ENCODE measurements at regions of chr17 and their contacts with region 1.

Region 1: DNA sequence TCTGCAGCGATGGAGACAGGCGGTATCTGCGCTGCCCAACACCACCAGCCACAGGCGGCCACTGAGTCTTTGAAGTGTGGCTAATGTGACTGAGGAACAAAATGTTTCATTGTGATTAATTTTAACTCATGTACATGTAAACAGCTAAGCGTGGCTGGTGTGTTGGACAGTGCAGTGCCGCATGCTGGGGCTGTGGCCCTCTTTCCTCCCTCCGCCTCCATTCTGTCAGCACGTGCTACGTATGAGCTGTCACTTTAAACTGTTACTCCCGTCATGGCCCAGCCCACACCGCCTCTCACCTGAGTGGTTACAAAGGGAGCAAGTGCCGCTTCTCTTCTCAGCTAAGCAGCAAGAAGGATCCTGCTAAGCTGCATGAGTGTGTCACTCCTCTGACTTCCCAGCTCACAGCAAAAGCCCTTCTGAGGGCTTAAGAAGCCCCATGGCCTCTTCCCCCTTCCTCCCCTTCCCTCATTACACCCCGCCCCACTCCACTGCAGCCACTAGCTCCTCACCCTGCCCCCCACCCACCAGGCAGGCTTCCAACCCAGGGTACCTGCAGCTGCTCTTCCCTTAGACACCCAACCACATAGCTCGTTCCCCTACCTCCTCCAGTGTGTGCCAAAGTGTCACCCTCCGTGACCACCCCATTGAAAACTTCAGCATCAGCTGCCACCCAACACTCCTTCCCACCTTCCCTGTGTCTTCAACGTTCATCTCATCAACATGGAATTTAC is 15.0 kb downstream of the HASPIN start:
- DNase-seq: no peak
- H3K4me3 ChIP-seq: no peak overlapping the region
- CTCF ChIP-seq: no peak

Region 2: GRCh38 chr17:3754458-3755334 is 16.0 kb after region 1 on chr17:
- CTCF ChIA-PET with region 1: interaction called, 122 read pairs
- POLR2A ChIA-PET with region 1: no interaction called
- DNase-seq: no peak
- H3K4me3 ChIP-seq: no peak overlapping the region
- CTCF ChIP-seq: no peak

Region 3: DNA sequence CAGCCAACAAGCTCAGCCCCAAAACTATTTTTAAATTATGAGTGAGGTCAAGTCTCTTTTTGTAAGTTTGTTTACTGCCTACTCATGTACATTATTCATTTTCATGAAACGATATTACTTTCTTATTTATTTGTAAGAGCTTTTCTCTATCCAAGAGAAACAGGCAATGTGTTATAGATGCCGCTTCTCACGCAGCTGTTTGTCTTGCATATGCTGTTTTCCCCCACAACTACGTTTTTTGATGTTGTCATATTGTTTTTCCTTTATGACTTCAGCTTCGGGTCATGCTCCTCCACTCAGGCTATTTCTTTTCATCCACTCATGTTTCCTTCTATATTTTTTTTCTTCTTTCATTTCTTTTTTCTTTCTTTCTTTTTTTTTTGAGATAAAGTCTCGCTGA is 42.3 kb after region 1 on chr17:
- CTCF ChIA-PET with region 1: interaction called, 11 read pairs
- POLR2A ChIA-PET with region 1: no interaction called
- DNase-seq: no peak
- H3K4me3 ChIP-seq: no peak overlapping the region
- CTCF ChIP-seq: no peak

Region 4: DNA sequence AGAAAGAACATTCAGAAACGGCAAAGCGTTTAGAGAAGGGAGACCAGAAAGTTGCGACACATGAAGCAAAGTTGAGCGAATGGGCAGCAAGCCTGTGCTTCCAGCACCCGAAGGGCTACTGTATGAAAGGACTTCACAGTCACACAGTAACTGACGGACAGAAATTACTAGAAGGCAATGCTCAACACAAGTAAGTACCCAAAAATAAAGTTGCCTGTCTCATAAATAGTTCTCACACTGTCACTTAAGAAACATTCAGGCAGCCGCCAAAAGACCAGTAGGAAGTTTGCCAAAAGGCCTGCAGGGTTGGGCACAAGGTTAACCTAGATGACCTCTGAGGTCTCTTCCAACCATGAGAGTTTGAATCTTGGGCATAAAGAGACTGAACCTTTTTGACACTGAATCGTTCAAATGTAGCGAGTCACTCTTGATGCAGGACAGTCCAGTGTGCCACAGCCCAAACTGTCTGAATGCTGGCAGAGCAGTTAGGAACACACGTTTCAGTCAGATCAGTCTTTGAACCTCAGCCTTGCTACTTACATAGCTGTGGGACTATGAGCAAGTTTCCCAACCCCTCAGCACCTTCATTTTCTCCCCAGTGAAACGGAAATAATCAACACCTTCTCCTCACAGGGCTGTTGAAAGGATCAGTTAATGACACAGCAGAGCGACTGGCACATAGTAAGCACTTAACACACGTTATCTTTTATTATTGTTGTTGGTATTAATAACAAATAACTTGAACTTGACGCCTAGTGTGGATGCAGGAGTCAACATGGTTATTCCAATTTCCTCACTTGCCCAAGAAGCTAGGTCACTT is 96.9 kb after region 1 on chr17:
- CTCF ChIA-PET with region 1: interaction called, 15 read pairs
- POLR2A ChIA-PET with region 1: no interaction called
- DNase-seq: no peak
- H3K4me3 ChIP-seq: no peak overlapping the region
- CTCF ChIP-seq: no peak

Region 5: GRCh38 chr17:3865176-3865575 is 126.4 kb after region 1 on chr17:
- CTCF ChIA-PET with region 1: interaction called, 30 read pairs
- POLR2A ChIA-PET with region 1: no interaction called
- DNase-seq: no peak
- H3K4me3 ChIP-seq: no peak overlapping the region
- CTCF ChIP-seq: no peak

Measured in AG04449 (cell line).